ENCODE measurements at regions of chr1 and their contacts with region 1.

Region 1: DNA sequence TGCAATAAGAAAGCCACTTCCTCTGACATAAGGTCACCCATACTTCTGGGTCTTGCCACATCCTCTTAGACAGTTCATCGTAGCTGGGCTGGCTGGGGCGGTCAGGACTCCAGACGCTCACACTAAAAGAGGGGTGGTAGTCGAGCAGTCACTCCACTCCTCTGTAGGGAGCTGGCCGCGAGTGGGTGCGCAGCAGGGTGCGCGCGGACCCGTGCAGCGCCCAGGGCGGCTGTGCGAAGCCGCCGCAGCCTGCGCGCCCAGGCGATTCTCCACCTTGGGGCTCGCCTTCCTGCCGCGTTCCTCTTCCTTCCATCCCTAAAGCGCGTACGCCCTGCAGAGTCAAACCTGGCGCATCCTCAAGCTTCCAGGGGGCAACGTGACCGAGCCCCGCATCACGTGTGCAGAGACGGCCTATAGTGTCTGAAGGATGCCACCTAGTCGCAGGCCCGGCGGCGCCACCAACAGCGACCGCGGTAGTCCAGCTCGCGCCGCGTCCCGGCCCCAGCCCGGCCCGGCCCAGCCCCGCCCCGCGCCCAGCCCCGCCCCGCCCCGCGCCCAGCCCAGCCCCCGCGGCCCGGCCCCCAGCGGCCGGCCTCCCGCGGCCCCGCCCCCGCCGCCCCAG is 360 bp upstream of the PRDX6 start:
- DNase-seq: peak; percentile 87
- ATAC-seq: peak; percentile 96
- H3K4me3 Mint-ChIP-seq: peak overlapping the region; percentile 94
- H3K27ac Mint-ChIP-seq: peak overlapping the region; percentile 89; the same call in 1 of the 2 replicates
- H3K4me1 Mint-ChIP-seq: peaks cover 41% of the 10 kb centered on the region
- H3K27me3 Mint-ChIP-seq: no peaks in the 10 kb centered on the region
- CTCF ChIP-seq: no peak

Region 2: DNA sequence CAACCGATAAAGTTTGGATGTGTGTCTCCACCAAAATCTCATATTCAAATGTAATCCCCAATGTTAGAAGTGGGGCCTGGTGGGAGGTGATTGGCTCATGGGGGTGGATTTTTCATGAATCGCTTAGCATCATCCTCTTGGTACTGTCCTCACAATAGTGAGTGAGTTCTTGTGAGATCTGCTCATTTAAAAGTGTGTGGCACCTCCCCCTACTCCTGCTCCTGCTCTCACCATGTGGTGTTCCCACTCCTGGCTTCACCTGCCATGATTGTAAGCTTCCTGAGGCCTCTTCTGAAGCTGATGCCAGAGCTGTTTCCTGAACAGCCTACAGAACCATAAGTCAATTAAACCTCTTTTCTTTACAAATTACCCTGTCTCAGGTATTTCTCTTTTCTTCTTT is 27.8 kb before region 1 on chr1:
- CTCF ChIA-PET with region 1: interaction called, 6 read pairs
- POLR2A ChIA-PET with region 1: interaction called, 10 read pairs
- DNase-seq: peak; percentile 16
- ATAC-seq: peak; percentile 92
- H3K4me3 Mint-ChIP-seq: peak overlapping the region; percentile 19; the same call in 1 of the 2 replicates
- H3K27ac Mint-ChIP-seq: peak overlapping the region; percentile 93
- H3K4me1 Mint-ChIP-seq: peaks cover 72% of the 10 kb centered on the region
- H3K27me3 Mint-ChIP-seq: no peaks in the 10 kb centered on the region
- CTCF ChIP-seq: no peak

Measured in WTC11 (cell line).